ENCODE measurements at regions of chr12 and their contacts with region 1.

Region 1: GRCh38 chr12:56551070-56551469 is 29.4 kb downstream of the RBMS2 start:
- DNase-seq: no peak
- H3K4me3 ChIP-seq: no peak overlapping the region
- H3K27ac ChIP-seq: no peak overlapping the region
- H3K4me1 ChIP-seq: no peaks in the 10 kb centered on the region
- H3K27me3 ChIP-seq: no peaks in the 10 kb centered on the region
- CTCF ChIP-seq: no peak
- EP300 ChIP-seq: no peak
- POLR2A ChIP-seq: no peak
- RAD21 ChIP-seq: no peak

Region 2: DNA sequence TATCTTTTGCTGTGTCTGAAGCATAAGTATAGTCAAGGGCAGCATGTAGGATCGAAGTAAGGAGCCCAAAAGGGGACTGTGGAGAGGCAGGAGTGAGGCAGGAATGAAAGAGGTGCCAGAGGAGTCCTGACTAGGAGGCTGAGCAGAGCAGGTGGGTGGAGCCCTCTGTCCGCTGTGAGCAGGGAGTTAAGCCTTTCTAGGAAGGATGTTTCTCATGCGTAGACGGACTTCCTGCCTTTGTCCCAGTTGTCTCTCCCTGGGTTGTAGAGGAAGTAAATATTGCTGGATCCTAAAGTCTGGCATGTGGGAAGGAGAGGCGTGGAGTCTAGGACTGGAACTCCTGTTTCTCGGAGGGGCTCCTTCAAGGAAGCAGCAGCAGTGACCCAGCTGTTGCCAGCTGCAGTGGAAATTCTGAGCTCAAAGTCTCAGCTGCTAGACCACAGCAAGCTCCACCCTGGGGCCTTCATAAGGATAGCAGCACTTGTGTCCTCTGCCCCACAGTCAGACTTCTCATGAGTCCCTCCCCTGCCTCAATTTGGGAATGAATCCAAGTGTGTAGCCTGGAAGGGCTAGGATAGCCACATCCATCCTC is 14.5 kb after region 1 on chr12:
- CTCF ChIA-PET with region 1: interaction called, 11 read pairs
- POLR2A ChIA-PET with region 1: interaction called, 3 read pairs
- DNase-seq: peak in 1 of 2 experiments; percentile 53
- H3K4me3 ChIP-seq: no peak overlapping the region
- H3K27ac ChIP-seq: no peak overlapping the region
- H3K4me1 ChIP-seq: peaks cover 0 to 4% (median 2%) of the 10 kb centered on the region in 4 experiments; a peak in 4 of 7 replicates
- H3K27me3 ChIP-seq: no peaks in the 10 kb centered on the region
- CTCF ChIP-seq: no peak
- EP300 ChIP-seq: no peak
- POLR2A ChIP-seq: no peak
- RAD21 ChIP-seq: no peak

Region 3: GRCh38 chr12:56574210-56574609 is 23.1 kb after region 1 on chr12:
- CTCF ChIA-PET with region 1: interaction called, 24 read pairs
- POLR2A ChIA-PET with region 1: no interaction called
- DNase-seq: no peak
- H3K4me3 ChIP-seq: no peak overlapping the region
- H3K27ac ChIP-seq: no peak overlapping the region
- H3K4me1 ChIP-seq: no peaks in the 10 kb centered on the region
- H3K27me3 ChIP-seq: no peaks in the 10 kb centered on the region
- CTCF ChIP-seq: no peak
- EP300 ChIP-seq: no peak
- POLR2A ChIP-seq: no peak
- RAD21 ChIP-seq: no peak